Activated naive CD8-positive, alpha-beta T cell treated with anti-CD3 and anti-CD28 coated beads, Interleukin-2, amount 10 ng/mL, durations not matched to agents 7 days and 5 days (primary cell): ENCODE measurements at regions of chr17 and their contacts with region 1.

Region 1: DNA sequence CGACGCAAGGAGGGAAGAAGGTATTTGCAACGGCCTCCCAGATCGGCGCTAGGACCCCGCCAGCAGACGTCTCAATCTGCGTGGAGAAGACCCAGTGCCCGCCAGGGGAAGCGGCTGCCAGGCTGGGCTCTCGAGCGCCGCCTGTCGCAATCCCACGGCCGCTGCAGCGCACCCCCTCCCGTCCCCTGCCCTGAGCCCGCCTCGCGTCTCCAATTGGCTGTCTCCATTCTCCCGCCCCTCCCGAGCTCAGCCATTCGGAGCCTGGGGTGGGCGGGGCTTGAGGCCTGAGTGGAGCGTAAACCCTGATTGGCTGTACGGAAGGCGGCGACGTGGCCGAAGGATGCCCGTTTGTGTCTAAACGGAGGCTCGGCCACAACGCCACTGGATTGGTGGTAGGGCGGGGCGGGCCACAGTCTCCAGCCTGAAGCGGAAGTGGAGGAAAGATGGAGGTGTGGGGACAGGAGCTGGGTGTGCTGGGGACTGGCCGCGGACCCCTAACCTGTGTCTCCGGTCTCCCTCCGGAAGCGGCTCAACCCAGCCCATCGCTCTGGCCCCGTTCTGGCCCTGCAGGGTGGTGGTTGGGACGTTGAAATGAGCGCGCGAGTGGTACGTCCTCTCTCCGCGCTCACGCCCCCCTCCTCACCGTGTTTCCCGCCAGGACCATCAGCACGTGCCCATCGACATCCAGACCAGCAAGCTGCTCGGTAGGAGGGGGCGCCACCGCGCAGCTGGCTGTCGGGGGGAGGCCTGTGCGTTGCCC is at the start of gene CDK5RAP3:
- DNase-seq: peak; percentile 100
- ATAC-seq: peak; percentile 98
- H3K4me3 Mint-ChIP-seq: peak within 1 kb of the TSS; percentile 97
- H3K27ac Mint-ChIP-seq: peak within 1 kb of the TSS; percentile 64
- H3K4me1 Mint-ChIP-seq: peaks cover 28% of the 10 kb centered on the region
- H3K27me3 Mint-ChIP-seq: no peaks in the 10 kb centered on the region
- total RNA-seq, gene CDK5RAP3: 286 to 287 TPM

Region 2: DNA sequence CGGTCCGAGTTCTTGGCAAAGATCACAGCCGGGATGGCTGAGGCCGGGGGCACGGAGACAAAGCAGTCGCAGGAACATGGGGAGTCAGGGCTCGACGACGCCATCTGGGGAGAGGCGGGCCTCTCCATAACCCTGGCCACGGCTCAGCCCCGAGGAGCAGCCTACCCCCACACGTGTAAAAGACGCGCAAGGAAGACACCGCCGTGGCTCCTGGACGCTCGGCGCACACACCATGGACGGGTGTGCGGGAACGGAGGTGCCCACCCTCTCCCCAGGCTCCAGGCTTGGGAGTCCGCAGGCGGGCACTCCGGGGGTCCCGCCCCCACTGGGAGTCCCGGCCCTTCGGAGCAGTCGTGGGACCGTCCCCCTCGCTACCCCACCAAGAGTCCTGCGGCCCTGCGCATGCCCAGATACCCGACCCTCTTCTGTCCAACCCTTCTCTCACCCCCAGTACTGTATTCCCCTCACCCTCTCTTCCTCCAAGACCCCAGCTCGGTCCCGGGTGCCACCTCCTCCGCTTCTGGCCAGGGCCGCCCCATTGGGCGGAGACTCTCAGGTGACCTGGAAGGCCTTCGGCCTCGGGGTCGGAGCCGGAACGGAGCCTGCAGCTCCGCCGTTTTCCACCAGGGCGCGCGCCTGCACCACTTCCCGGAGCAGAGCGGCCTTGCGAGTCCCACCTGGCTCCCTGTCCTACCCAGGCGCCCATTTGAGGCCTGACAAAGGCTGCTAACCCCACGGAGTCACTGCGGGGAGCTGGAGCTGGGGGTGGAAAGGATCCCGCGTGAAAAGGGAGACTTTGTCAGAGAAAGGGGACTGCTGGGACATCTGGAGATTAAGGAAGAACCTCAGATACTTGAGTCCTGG is 129.9 kb before region 1 on chr17 and contains the start of gene SCRN2:
- POLR2A ChIA-PET with region 1: interaction called, 16 read pairs
- DNase-seq: peak; percentile 96
- ATAC-seq: peak; percentile 84
- H3K4me3 Mint-ChIP-seq: peak within 1 kb of the TSS; percentile 100
- H3K27ac Mint-ChIP-seq: peak within 1 kb of the TSS; percentile 95
- H3K4me1 Mint-ChIP-seq: peaks cover 25% of the 10 kb centered on the region
- H3K27me3 Mint-ChIP-seq: peaks cover 11% of the 10 kb centered on the region
- total RNA-seq, gene SCRN2: 38.0 to 39.6 TPM

Region 3: DNA sequence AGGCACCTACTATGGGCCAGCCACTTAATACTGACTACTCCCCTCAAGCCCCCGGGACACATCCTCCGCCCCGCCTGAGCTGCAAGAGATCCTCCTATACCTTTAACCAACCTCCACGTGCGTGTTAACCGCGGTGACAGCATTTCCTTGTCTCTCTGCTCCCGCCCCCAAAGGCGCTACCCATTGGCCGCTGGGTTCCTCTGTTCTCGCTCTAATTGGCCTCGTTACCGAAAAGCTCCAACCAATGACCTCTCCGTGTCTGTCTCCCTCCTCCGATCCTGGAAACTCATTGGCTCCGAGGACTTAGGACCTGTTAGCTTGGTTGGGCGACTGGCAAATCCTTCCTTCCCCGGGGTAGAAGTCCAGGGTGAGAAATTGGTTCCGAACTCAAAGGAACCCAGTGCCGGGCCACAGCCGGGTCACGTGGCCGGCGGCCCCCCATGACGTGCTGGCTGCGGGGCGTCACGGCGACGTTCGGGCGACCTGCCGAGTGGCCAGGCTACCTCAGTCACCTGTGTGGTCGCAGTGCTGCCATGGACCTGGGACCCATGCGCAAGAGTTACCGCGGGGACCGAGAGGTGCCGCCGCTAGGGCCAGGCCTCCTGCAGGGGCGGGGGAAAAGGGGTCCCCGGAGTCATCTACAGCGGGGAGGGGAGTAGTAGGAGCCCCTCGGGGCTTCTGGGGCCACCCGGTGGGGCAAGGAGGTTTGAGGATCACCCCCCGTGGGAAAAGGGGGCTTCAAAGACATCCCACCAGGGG is 29.5 kb before region 1 on chr17 and contains the start of gene PNPO:
- POLR2A ChIA-PET with region 1: interaction called, 49 read pairs
- DNase-seq: peak; percentile 87
- ATAC-seq: peak; percentile 98
- H3K4me3 Mint-ChIP-seq: peak within 1 kb of the TSS; percentile 97
- H3K27ac Mint-ChIP-seq: peak within 1 kb of the TSS; percentile 78
- H3K4me1 Mint-ChIP-seq: peaks cover 37% of the 10 kb centered on the region
- H3K27me3 Mint-ChIP-seq: no peaks in the 10 kb centered on the region
- total RNA-seq, gene PNPO: 32.5 to 32.8 TPM

Region 4: GRCh38 chr17:47949136-47949759 is 21.6 kb before region 1 on chr17:
- POLR2A ChIA-PET with region 1: interaction called, 49 read pairs
- DNase-seq: peak; percentile 90
- ATAC-seq: peak; percentile 53
- H3K4me3 Mint-ChIP-seq: peak overlapping the region; percentile 70
- H3K27ac Mint-ChIP-seq: peak overlapping the region; percentile 80
- H3K4me1 Mint-ChIP-seq: peaks cover 35% of the 10 kb centered on the region
- H3K27me3 Mint-ChIP-seq: no peaks in the 10 kb centered on the region

Region 5: DNA sequence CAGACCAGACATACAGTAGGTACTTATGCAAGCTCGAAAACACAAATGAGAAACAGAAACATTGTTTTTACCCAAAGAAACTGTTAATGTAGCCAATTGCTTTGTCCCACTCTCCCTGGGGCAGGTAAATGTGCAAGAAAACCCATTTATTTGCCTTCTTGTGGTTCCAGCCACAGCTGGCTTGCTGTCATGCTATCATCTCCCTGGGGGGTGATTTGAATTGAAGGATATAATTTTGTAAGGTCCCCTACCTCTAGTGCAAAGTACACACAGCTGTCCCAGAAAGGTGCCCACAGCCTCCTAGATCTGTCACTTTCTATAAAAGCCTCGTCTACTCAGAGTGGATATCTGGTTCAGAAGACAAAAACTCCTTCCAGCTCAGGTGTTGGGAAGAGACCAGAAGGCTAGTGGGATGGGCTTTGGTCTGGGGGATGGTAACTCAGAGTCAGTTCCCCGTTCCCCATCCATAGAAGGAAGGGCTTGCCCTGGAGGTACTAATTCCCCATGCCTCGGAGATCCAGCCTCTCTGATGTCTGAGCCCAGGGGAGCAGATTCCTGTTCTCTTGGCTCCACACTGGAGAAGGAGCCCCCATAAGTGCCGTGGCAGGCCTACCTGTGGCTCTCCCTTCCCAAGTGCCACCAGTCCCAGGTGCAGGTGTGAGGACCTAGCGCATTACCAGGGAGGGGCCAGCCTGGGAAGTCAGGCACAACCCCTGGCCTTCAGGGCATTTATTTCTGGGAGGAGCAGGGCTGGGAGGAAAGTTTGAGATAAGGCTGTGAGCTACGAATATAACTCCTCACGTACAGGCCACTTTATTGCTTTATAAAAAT is 10.8 kb before region 1 on chr17:
- POLR2A ChIA-PET with region 1: interaction called, 12 read pairs
- DNase-seq: no peak
- ATAC-seq: no peak
- H3K4me3 Mint-ChIP-seq: no peak overlapping the region
- H3K27ac Mint-ChIP-seq: no peak overlapping the region
- H3K4me1 Mint-ChIP-seq: no peaks in the 10 kb centered on the region
- H3K27me3 Mint-ChIP-seq: peaks cover 3% of the 10 kb centered on the region

Region 6: DNA sequence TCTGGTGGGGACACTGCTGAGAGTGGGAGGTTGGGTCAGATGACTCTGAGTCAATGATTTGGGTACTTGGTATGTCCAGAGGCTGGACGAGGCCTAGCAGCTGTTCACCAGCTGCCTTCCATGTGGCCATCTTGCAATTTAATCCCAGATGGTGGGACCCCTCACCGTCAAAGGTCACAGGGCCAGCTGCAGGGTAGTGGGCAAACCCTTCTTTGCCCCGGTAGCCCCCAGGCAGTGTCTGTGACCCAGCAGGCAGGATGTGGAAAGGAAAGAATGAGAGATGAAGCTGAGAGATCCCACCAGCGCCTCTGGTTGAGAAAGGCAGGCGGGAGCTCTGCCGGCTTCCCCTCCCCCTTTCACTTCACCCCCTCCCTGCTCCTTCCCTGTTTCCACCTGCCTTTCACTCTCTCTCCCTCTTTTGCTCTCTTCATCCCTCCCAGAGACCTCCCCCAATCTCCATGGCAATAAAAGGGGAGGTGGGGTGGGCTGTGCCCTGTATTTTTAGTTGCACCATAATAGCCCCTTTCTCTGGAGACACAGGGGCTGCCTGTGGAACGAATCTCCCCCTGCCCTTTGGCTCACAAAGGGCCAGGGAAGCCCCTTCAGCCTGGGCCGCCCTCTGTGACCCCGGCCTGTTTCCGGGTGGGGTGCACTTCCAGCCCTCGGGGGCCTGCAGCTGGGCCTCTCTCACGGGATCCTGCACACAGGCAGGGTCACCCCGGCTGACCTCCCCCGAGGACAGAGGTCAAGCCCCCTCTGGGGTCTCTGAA is 20.3 kb after region 1 on chr17:
- POLR2A ChIA-PET with region 1: no interaction called
- DNase-seq: no peak
- ATAC-seq: no peak
- H3K4me3 Mint-ChIP-seq: no peak overlapping the region
- H3K27ac Mint-ChIP-seq: no peak overlapping the region
- H3K4me1 Mint-ChIP-seq: peaks cover 20% of the 10 kb centered on the region
- H3K27me3 Mint-ChIP-seq: peaks cover 4% of the 10 kb centered on the region